WTC11 (cell line): ENCODE measurements at regions of chr15 and their contacts with region 1.

Region 1: DNA sequence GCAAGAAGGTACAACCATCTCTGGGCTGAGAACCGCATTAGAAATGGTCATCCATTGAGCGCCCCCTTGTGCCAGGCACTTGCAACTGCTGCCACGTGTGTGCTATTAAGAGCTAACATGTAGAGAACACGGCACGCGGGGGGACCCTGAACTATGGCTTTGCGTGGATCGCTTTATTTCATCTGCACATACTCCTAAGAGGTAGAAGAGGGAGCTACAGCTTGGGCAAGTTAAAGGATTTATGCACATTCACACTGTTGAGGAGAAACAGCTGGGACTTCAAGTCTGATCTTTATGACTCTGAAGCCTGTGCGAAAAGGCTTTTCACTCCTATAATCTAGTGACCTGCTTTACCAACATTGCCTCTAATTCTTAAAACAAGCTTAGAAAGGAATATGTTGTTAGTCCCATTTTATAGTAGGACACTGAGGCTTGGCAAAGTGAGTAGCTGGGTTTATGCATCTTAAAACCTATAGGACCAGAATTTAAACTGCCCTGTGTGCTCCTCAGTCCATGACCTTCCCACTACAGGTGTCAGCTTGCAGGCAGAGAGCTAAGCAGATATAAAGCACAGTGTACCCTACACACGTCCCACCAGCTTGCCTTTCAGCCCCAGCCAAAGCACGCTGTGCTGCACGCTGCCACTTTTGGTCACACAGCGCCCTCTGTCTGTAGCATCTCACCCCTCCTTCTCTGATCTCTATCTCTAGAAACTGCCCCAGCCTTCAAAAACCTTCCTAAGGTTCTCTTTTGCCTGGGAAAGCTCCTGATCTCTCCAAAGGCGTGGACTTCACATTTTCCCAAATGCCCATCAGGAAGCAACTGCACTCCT is 57.8 kb downstream of the STARD5 start:
- DNase-seq: peak; percentile 90
- ATAC-seq: peak; percentile 93
- H3K4me3 Mint-ChIP-seq: peak overlapping the region; percentile 58
- H3K27ac Mint-ChIP-seq: no peak overlapping the region
- H3K4me1 Mint-ChIP-seq: peaks cover 13% of the 10 kb centered on the region
- H3K27me3 Mint-ChIP-seq: no peaks in the 10 kb centered on the region
- CTCF ChIP-seq: peak; percentile 78

Region 2: GRCh38 chr15:81000624-81001151 is 265.5 kb before region 1 on chr15 and contains the start of gene TLNRD1:
- CTCF ChIA-PET with region 1: interaction called, 37 read pairs
- POLR2A ChIA-PET with region 1: interaction called, 3 read pairs
- DNase-seq: peak; percentile 85
- ATAC-seq: peak; percentile 47
- H3K4me3 Mint-ChIP-seq: peak within 1 kb of the TSS; percentile 93
- H3K27ac Mint-ChIP-seq: peak within 1 kb of the TSS; percentile 86
- H3K4me1 Mint-ChIP-seq: peaks cover 13% of the 10 kb centered on the region
- H3K27me3 Mint-ChIP-seq: peaks cover 10% of the 10 kb centered on the region
- CTCF ChIP-seq: no peak
- total RNA-seq, gene TLNRD1: 21.4 to 26.7 TPM (median 22.3 TPM) in 3 replicates

Region 3: DNA sequence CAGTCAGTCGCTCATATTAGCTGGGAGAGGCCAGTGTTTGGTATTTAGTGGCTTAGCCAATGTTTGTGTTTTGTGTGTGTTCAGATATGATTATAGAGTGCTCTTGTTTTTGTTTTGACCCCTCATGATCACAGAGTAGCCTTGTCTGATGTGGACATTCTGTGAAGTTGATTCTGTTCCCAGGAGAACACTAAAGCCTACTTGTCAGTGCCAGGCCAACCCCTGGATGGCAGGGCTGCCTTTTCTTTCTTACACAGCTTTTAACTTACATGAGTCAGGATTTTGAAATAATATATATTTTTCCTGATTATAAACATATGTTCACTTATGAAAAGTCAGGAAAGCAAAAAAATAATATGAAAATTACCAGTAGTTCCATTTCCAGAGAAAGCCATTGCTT is 120.2 kb before region 1 on chr15:
- CTCF ChIA-PET with region 1: interaction called, 10 read pairs
- POLR2A ChIA-PET with region 1: no interaction called
- DNase-seq: no peak
- ATAC-seq: no peak
- H3K4me3 Mint-ChIP-seq: no peak overlapping the region
- H3K27ac Mint-ChIP-seq: no peak overlapping the region
- H3K4me1 Mint-ChIP-seq: no peaks in the 10 kb centered on the region
- H3K27me3 Mint-ChIP-seq: no peaks in the 10 kb centered on the region
- CTCF ChIP-seq: no peak

Region 4: GRCh38 chr15:81189583-81190283 is 76.4 kb before region 1 on chr15:
- CTCF ChIA-PET with region 1: interaction called, 25 read pairs
- POLR2A ChIA-PET with region 1: no interaction called
- DNase-seq: no peak
- ATAC-seq: no peak
- H3K4me3 Mint-ChIP-seq: no peak overlapping the region
- H3K27ac Mint-ChIP-seq: no peak overlapping the region
- H3K4me1 Mint-ChIP-seq: no peaks in the 10 kb centered on the region
- H3K27me3 Mint-ChIP-seq: no peaks in the 10 kb centered on the region
- CTCF ChIP-seq: no peak

Region 5: DNA sequence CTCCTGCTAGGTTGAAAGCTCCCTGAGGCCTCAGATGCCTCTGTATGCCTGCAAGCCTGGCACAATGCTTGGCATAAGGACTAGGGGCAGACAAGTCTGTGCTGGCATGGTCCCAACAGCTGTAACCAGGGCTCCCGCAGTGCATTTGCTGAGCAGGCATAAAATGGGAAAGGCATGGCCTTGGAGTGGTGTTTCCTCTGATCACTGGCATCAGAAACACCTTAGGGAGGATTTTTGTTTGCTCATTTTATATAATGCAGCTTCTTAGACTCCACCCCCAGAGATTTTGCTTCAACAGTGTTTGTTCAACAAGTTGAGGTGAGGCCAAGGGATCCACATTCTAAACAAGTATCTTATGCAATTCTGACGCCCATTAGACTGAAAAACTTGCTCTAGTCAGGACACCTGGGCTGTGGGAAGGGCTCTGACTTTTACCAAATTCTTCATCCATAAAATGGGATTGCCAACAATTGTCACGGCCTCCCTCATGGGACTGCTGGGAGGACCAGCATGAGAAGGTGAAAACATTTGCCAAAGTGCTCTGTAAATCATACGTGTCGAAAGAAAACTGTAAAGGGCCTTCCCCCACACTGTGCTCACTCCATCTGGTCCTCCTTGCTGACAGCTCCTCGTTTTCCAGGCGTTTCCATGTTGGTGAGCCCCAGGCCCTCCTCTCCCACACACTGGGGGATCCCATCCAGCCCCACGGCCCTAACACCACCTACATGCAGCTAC is 14.7 kb after region 1 on chr15:
- CTCF ChIA-PET with region 1: interaction called, 57 read pairs
- POLR2A ChIA-PET with region 1: no interaction called
- DNase-seq: no peak
- ATAC-seq: no peak
- H3K4me3 Mint-ChIP-seq: no peak overlapping the region
- H3K27ac Mint-ChIP-seq: no peak overlapping the region
- H3K4me1 Mint-ChIP-seq: no peaks in the 10 kb centered on the region
- H3K27me3 Mint-ChIP-seq: peaks cover 5% of the 10 kb centered on the region
- CTCF ChIP-seq: no peak

Region 6: GRCh38 chr15:81381720-81382119 is 115.6 kb after region 1 on chr15:
- CTCF ChIA-PET with region 1: interaction called, 10 read pairs
- POLR2A ChIA-PET with region 1: no interaction called
- DNase-seq: no peak
- ATAC-seq: peak; percentile 87
- H3K4me3 Mint-ChIP-seq: no peak overlapping the region
- H3K27ac Mint-ChIP-seq: no peak overlapping the region; the same call in 1 of the 2 replicates
- H3K4me1 Mint-ChIP-seq: peaks cover 15% of the 10 kb centered on the region
- H3K27me3 Mint-ChIP-seq: no peaks in the 10 kb centered on the region
- CTCF ChIP-seq: no peak

Region 7: GRCh38 chr15:81504170-81504905 is 238.2 kb after region 1 on chr15:
- CTCF ChIA-PET with region 1: no interaction called
- POLR2A ChIA-PET with region 1: no interaction called
- DNase-seq: no peak
- ATAC-seq: no peak
- H3K4me3 Mint-ChIP-seq: no peak overlapping the region
- H3K27ac Mint-ChIP-seq: no peak overlapping the region
- H3K4me1 Mint-ChIP-seq: no peaks in the 10 kb centered on the region
- H3K27me3 Mint-ChIP-seq: no peaks in the 10 kb centered on the region
- CTCF ChIP-seq: no peak